Calu3 (cell line): ENCODE measurements at regions of chr1 and their contacts with region 1.

Region 1: DNA sequence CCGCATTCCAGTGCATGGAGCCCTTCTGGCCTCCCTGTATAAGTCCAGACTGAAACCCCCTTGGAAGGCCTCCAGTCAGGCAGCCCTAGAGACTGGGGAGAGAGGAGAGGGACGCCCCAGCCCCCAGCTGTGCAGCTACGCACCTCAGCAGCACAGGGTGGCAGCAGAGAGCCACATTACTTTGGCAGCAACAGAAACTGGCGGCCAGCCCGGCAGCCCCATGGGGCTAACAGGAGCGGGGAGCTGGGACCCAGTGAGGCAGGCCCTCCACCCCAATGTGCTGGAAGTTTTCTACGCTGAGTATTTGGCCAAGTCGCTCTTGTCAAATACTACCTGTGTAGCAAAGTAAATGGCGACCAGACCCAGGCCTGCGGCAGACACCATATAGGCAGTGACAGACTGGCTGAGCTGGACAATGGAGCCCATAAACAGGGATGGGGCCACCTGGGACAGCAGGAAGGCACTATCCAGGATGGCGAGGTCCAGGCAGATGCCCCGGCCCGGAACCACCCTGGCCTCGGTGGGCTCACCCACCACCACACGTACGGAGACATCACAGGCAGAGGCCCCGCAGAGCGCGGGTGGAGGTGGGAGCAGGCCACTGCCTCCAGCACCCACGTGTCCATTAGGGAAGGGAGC is 21.2 kb downstream of the SLC45A3 start:
- DNase-seq: peak; percentile 89
- H3K4me3 Mint-ChIP-seq: no peak overlapping the region
- H3K27ac Mint-ChIP-seq: no peak overlapping the region
- H3K4me1 Mint-ChIP-seq: peaks cover 35% of the 10 kb centered on the region
- H3K27me3 Mint-ChIP-seq: no peaks in the 10 kb centered on the region
- CTCF ChIP-seq: peak; percentile 82

Region 2: GRCh38 chr1:205430696-205431305 is 228.3 kb before region 1 on chr1:
- CTCF ChIA-PET with region 1: no interaction called
- intact Hi-C with region 1: no loop called
- DNase-seq: peak; percentile 76
- H3K4me3 Mint-ChIP-seq: peak overlapping the region; percentile 63
- H3K27ac Mint-ChIP-seq: peak overlapping the region; percentile 13
- H3K4me1 Mint-ChIP-seq: peaks cover 8% of the 10 kb centered on the region
- H3K27me3 Mint-ChIP-seq: peaks cover 65% of the 10 kb centered on the region
- CTCF ChIP-seq: peak; percentile 94

Region 3: DNA sequence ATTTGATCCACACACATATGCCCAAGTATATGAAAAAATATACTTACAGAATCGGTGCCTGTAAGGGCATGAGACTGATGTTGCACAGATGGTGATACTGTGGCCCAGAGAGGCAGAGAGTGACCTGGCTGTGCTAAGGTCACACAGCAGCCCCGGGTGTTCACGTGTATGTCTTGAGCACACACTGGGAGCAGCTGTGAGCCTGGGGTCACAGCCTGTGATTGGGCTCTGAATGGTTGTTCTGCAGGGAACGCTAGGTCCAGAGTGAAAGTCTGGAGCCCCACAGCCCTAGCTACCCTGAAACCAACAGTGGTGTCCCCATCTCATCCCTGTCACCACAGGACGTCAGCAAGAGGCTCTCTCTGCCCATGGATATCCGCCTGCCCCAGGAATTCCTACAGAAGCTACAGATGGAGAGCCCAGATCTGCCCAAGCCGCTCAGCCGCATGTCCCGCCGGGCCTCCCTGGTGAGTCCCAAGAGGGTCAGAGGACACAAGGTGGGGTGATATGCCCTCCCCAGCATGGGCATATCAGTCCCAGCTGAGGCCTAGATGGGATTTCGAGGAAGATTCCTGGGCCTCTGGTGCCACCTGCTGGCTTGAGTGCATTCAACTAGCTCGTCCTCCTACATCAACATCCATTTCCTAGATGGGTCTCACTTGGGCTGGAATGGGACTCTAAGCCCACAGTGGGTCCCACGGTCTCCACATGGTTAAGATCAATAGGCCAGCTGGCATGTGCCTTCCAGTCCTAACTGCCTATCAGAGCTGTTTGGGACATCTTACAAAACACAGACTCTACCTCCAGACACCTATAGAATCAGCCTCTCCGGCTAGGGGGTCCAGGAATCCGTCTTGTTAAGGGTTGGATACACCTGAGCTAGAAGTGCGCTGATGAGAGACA is 134.9 kb before region 1 on chr1:
- CTCF ChIA-PET with region 1: interaction called, 35 read pairs
- intact Hi-C with region 1: loop called (anchors 1 kb)
- DNase-seq: peak; percentile 87
- H3K4me3 Mint-ChIP-seq: no peak overlapping the region
- H3K27ac Mint-ChIP-seq: no peak overlapping the region
- H3K4me1 Mint-ChIP-seq: peaks cover 10% of the 10 kb centered on the region
- H3K27me3 Mint-ChIP-seq: no peaks in the 10 kb centered on the region
- CTCF ChIP-seq: peak; percentile 90

Region 4: GRCh38 chr1:205536759-205537361 is 122.2 kb before region 1 on chr1:
- CTCF ChIA-PET with region 1: interaction called, 21 read pairs
- intact Hi-C with region 1: no loop called
- DNase-seq: peak; percentile 80
- H3K4me3 Mint-ChIP-seq: peak overlapping the region; percentile 0
- H3K27ac Mint-ChIP-seq: peak overlapping the region; percentile 7
- H3K4me1 Mint-ChIP-seq: peaks cover 28% of the 10 kb centered on the region
- H3K27me3 Mint-ChIP-seq: no peaks in the 10 kb centered on the region
- CTCF ChIP-seq: no peak

Region 5: DNA sequence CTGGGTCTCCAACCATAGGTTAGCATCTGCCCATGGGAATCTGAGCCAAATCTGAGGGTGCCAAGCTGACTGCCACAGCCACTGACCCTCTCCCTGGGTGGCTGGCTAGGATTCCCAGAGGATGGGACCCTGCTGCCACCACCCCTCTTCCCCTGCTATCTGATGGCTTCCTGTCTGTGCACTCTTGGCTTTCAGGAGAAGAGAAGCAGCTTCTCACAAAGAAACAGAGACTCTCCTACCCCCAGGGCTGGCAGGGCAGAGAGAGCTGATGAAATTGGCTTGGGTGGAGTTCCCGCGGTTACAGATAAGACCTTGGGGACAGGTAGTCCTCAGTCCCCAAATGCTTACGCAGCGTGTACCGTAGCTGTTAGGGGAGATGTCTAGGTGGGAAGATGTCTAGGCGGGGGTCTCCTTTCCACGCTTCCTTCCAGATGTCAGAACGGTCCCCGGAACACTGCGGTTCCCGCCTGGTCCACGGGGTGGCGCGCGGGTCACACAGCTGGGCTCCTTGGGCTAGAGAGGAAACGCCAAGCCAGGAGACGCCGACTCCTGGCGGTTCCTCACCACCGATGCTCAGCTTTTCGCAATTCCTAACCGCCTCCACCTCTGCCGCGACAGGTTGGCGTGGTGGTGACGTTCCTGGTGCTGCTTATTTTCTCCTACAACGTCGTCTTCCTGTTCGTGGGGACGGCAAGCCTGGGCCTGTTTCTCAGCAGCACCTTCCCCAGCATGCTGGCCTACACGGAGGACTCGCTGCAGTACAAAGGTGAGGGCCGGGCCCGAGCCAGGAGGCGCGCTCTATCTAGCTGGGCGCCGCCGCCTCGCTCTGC is 67.3 kb before region 1 on chr1:
- CTCF ChIA-PET with region 1: interaction called, 146 read pairs
- intact Hi-C with region 1: loop called (anchors 1 kb)
- DNase-seq: peak; percentile 98
- H3K4me3 Mint-ChIP-seq: peak overlapping the region; percentile 67
- H3K27ac Mint-ChIP-seq: peak overlapping the region; percentile 70
- H3K4me1 Mint-ChIP-seq: peaks cover 47% of the 10 kb centered on the region
- H3K27me3 Mint-ChIP-seq: no peaks in the 10 kb centered on the region
- CTCF ChIP-seq: peak; percentile 99

Region 6: GRCh38 chr1:205631727-205632373 is 27.2 kb before region 1 on chr1 and contains the start of gene ELK4:
- CTCF ChIA-PET with region 1: interaction called, 16 read pairs
- intact Hi-C with region 1: no loop called
- DNase-seq: peak; percentile 100
- H3K4me3 Mint-ChIP-seq: peak within 1 kb of the TSS; percentile 88
- H3K27ac Mint-ChIP-seq: peak within 1 kb of the TSS; percentile 97
- H3K4me1 Mint-ChIP-seq: peaks cover 7% of the 10 kb centered on the region
- H3K27me3 Mint-ChIP-seq: no peaks in the 10 kb centered on the region
- CTCF ChIP-seq: peak; percentile 90
- total RNA-seq, gene ELK4: 110 and 122 TPM in 2 replicates

Region 7: DNA sequence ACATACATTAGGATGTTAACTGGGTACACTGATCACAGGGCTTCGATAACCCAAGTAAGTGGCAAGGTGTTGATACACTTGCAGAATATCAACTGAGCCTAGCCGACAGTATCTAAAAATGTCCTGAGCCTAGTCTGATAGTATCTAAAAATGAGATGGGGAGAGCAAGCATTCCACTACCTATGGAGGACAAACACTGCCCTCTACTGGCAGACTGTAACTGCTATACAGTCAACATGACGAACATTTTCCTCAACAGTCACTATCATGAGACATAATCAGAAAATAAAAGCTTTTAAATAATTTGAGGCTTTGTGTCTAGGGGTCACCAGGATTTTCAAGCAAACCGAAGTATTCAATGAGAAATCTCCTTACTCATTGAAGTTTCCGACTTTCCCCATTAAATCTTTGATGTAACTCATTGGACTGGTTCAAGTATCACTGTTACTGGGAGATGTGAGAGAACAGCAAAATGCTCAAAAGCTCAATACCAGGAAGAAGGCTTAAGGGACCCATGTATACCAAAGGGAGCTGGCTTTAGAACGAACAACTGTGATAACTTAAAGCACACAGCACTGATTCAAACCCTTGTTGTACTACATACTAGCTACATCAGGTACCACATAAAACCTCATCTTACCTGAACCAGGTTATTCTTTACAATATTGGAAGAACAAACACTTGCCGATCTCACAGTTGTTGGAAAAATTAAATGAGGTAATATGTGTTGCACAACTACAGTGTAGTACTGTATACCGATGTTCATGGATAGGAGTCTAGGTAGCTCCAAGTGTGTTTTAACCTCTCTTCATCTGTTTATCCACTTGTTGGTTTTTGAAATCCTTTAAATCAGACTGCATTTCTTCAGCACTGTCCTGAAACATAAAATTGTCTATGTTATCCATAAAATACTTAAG is 52.3 kb after region 1 on chr1:
- CTCF ChIA-PET with region 1: interaction called, 101 read pairs
- intact Hi-C with region 1: loop called (anchors 1 kb)
- DNase-seq: peak; percentile 77
- H3K4me3 Mint-ChIP-seq: no peak overlapping the region
- H3K27ac Mint-ChIP-seq: peak overlapping the region; percentile 60
- H3K4me1 Mint-ChIP-seq: peaks cover 22% of the 10 kb centered on the region
- H3K27me3 Mint-ChIP-seq: no peaks in the 10 kb centered on the region
- CTCF ChIP-seq: peak; percentile 76